ENCODE measurements at regions of chr3 and their contacts with region 1.

Region 1: GRCh38 chr3:186821429-186822367 is 15.4 kb upstream of the RFC4 start:
- DNase-seq: peak; percentile 66
- ATAC-seq: no peak
- H3K4me3 ChIP-seq: no peak overlapping the region
- H3K4me3 Mint-ChIP-seq: no peak overlapping the region
- H3K27ac ChIP-seq: no peak overlapping the region
- H3K27ac Mint-ChIP-seq: no peak overlapping the region
- H3K4me1 ChIP-seq: peaks cover 19 to 21% of the 10 kb centered on the region in 2 donors
- H3K4me1 Mint-ChIP-seq: peaks cover 19% of the 10 kb centered on the region
- H3K27me3 ChIP-seq: peaks cover 0 to 27% (median 15%) of the 10 kb centered on the region in 4 experiments
- H3K27me3 Mint-ChIP-seq: peaks cover 19% of the 10 kb centered on the region
- CTCF ChIP-seq: peak; percentile 80

Region 2: GRCh38 chr3:186806089-186807055 is 15.3 kb before region 1 on chr3 and contains the start of gene RFC4:
- CTCF ChIA-PET with region 1: interaction called, 25 read pairs
- POLR2A ChIA-PET with region 1: no interaction called
- intact Hi-C with region 1: no loop called
- DNase-seq: peak; percentile 88
- ATAC-seq: peak; percentile 91
- H3K4me3 ChIP-seq: peak within 1 kb of the TSS; percentile 78 to 96 (median 90)
- H3K4me3 Mint-ChIP-seq: peak within 1 kb of the TSS; percentile 99
- H3K27ac ChIP-seq: peak within 1 kb of the TSS; percentile 78 to 86
- H3K27ac Mint-ChIP-seq: peak within 1 kb of the TSS; percentile 97
- H3K4me1 ChIP-seq: peaks cover 15 to 19% of the 10 kb centered on the region in 2 donors
- H3K4me1 Mint-ChIP-seq: peaks cover 20% of the 10 kb centered on the region
- H3K27me3 ChIP-seq: no peaks in the 10 kb centered on the region
- H3K27me3 Mint-ChIP-seq: no peaks in the 10 kb centered on the region
- CTCF ChIP-seq: no peak
- total RNA-seq, gene RFC4: 17.8 and 21.0 TPM in 2 replicates